ENCODE measurements at regions of chr7 and their contacts with region 1.

Region 1: DNA sequence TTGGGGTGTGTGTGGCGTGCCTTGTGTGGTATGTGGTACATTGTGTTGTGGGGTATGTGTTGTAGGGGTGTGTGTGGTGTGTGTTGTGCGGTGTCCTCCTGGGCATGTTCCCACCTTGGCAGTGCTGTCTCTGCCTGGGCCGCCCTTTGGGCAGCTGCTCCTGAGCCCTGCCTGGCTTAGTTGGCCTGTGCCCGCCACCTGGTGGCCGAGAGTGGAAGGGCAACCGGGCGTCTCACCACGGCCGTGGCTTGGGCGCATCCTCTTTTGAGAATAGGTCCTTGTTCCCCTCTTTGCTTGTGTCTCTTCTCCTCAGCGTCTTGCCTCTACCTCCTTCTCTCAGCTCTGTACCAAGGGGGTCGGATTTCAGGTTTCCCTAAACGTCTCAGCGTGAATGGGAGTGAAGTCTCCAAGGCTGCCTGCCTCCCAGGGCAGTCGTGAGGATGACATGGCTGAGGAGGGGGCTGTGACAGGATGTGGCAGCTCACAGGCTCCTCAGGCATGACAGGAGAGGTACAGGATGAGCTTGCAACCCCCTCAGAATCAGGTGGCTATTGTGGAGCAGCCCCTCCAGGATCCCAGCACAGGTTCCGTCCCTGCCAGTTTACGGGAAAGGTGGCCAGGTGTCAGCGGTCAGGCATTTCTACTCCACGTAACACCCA is 98.4 kb upstream of the PODXL start:
- DNase-seq: peak; percentile 87 to 89
- ATAC-seq: peak; percentile 91 to 97
- H3K4me3 ChIP-seq: no peak overlapping the region
- H3K27ac ChIP-seq: peak overlapping the region; percentile 61 to 71; a peak in 3 of 6 replicates
- H3K4me1 ChIP-seq: peaks cover 15% of the 10 kb centered on the region
- CTCF ChIP-seq: peak; percentile 74
- EP300 ChIP-seq: no peak
- POLR2A ChIP-seq: no peak
- RAD21 ChIP-seq: peak; percentile 93 to 98

Region 2: GRCh38 chr7:131507592-131508331 is 147.0 kb before region 1 on chr7:
- CTCF ChIA-PET with region 1: interaction called, 212 read pairs
- POLR2A ChIA-PET with region 1: no interaction called
- DNase-seq: peak; percentile 62 to 66
- ATAC-seq: peak; percentile 70 to 86
- H3K4me3 ChIP-seq: no peak overlapping the region
- H3K27ac ChIP-seq: peak overlapping the region in 1 of 2 experiments; percentile 62; a peak in 3 of 6 replicates
- H3K4me1 ChIP-seq: peaks cover 15% of the 10 kb centered on the region
- CTCF ChIP-seq: peak; percentile 92
- EP300 ChIP-seq: no peak
- POLR2A ChIP-seq: no peak
- RAD21 ChIP-seq: peak; percentile 85 to 90

Region 3: GRCh38 chr7:131538071-131538790 is 116.6 kb before region 1 on chr7:
- CTCF ChIA-PET with region 1: interaction called, 99 read pairs
- POLR2A ChIA-PET with region 1: no interaction called
- DNase-seq: peak in 1 of 2 experiments; percentile 72
- ATAC-seq: peak; percentile 63 to 71; a peak in 4 of 6 replicates
- H3K4me3 ChIP-seq: no peak overlapping the region
- H3K27ac ChIP-seq: peak overlapping the region; percentile 65 to 86
- H3K4me1 ChIP-seq: peaks cover 37% of the 10 kb centered on the region
- CTCF ChIP-seq: no peak
- EP300 ChIP-seq: no peak
- POLR2A ChIP-seq: no peak
- RAD21 ChIP-seq: no peak

Region 4: GRCh38 chr7:131562941-131563340 is 91.9 kb before region 1 on chr7:
- CTCF ChIA-PET with region 1: interaction called, 23 read pairs
- POLR2A ChIA-PET with region 1: no interaction called
- DNase-seq: no peak
- ATAC-seq: peak in 1 of 2 experiments; percentile 48; a peak in 1 of 6 replicates
- H3K4me3 ChIP-seq: no peak overlapping the region
- H3K27ac ChIP-seq: no peak overlapping the region
- H3K4me1 ChIP-seq: no peaks in the 10 kb centered on the region
- CTCF ChIP-seq: no peak
- EP300 ChIP-seq: no peak
- POLR2A ChIP-seq: no peak
- RAD21 ChIP-seq: no peak

Region 5: DNA sequence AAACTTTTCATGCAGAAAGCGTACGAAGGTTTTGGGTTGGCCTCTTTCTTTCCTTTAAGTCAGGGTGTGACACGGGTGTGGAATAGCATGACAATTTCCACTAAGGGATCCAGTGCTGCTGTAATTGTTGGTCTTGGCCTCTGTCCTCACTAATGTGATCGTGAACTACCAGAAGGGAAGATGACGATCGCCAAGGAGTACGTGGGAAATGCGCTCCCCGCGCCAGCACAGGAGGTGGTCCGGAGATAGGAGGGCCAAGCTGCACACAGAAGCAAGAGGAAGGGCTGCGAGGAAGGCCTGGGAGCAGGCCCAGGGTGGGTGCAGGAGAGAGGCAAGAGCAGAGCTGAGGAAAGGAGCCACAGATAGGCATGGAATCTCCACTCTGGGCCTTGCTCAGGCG is 18.7 kb before region 1 on chr7:
- CTCF ChIA-PET with region 1: interaction called, 21 read pairs
- POLR2A ChIA-PET with region 1: no interaction called
- DNase-seq: no peak
- ATAC-seq: no peak
- H3K4me3 ChIP-seq: no peak overlapping the region
- H3K27ac ChIP-seq: no peak overlapping the region
- H3K4me1 ChIP-seq: peaks cover 17% of the 10 kb centered on the region
- CTCF ChIP-seq: no peak
- EP300 ChIP-seq: no peak
- POLR2A ChIP-seq: no peak
- RAD21 ChIP-seq: no peak

Region 6: DNA sequence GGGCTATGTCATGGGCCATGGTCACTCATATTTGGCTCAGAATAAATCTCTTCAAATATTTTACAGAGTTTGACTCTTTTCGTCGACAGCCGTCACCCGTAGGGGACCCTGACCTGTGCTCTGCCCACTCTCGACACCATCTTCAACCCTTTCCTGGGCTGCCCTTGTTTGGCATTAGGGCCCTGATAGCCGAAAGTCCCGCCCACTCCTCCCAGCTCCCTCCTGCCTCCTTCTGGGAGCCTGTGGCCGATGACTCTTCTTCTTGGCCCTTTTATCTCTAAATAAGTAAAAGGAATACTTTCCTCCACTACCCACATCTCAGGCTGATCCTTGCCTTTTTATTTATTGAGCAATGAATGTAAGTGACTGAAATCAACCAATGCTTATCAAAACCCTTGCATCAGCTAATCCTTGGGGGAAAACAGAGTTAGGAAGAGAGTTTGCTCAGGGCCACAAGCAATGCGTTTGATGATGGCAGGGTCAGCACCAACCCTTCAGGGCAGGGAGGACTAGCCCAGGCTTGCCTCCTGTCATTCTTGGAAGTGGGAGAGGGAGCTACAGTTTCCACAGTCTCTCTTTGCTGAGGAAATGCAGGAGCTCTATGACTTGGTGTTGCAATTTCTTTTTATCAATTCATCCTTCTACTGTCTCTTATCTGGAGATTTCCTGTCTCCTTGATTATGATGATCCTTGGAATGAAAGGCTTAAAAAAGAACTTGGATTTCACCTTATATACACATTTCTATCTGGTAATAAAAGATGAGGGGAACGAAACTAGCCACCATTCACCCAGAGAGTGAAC is 119.8 kb after region 1 on chr7:
- CTCF ChIA-PET with region 1: no interaction called
- POLR2A ChIA-PET with region 1: no interaction called
- DNase-seq: no peak
- ATAC-seq: no peak
- H3K4me3 ChIP-seq: no peak overlapping the region
- H3K27ac ChIP-seq: no peak overlapping the region
- H3K4me1 ChIP-seq: peaks cover 3% of the 10 kb centered on the region; the same call in 2 of the 3 replicates
- CTCF ChIP-seq: no peak
- EP300 ChIP-seq: no peak
- POLR2A ChIP-seq: no peak
- RAD21 ChIP-seq: no peak